Natural killer cell (primary cell): ENCODE measurements at regions of chr15 and their contacts with region 1.

Region 1: DNA sequence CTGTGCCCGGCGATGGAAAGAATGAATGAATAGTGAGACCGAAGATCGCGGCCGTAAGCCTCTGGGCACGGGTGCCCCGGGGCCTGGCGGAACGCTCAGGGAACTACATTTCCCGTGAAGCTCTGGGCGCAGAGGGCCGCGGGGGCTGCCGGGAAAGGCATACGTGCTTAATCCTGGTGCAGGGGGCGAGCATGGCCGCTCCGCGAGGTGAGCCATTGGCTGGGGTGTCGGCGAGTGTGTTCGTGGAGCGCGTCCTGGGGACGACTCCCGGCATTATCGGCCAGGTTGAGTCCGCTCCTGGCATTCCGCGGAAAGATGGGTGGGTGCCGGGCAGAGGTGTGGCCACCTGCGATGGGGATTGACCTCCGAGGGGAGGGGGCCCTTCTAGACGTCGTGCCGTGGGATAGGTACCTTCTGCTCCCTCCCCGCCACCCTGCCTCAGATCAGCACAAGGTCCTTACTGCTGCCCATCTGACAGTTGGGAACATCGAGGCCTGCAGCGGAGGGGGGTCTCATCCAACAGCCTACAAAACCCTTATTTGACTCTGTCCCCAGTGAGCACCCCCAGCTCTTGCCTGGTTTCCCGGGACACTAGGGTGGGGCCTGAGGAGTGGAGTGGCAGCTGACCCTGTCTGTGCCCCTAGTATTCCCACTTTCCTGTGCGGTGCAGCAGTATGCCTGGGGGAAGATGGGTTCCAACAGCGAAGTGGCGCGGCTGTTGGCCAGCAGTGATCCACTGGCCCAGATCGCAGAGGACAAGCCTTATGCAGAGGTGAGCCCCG is at the start of gene MPI:
- DNase-seq: peak; percentile 75 to 89
- ATAC-seq: peak; percentile 97 to 100 (median 100)
- H3K4me3 ChIP-seq: peak within 1 kb of the TSS; percentile 65
- H3K4me3 Mint-ChIP-seq: peak within 1 kb of the TSS; percentile 86
- H3K27ac ChIP-seq: peak within 1 kb of the TSS; percentile 56
- H3K27ac Mint-ChIP-seq: peak within 1 kb of the TSS; percentile 85 to 87
- H3K4me1 ChIP-seq: peaks cover 42% of the 10 kb centered on the region
- H3K4me1 Mint-ChIP-seq: peaks cover 27 to 36% of the 10 kb centered on the region in 2 donors
- H3K27me3 ChIP-seq: no peaks in the 10 kb centered on the region
- H3K27me3 Mint-ChIP-seq: no peaks in the 10 kb centered on the region
- CTCF ChIP-seq: no peak
- total RNA-seq, gene MPI: 15.7 to 20.4 (median 18.8) TPM

Region 2: DNA sequence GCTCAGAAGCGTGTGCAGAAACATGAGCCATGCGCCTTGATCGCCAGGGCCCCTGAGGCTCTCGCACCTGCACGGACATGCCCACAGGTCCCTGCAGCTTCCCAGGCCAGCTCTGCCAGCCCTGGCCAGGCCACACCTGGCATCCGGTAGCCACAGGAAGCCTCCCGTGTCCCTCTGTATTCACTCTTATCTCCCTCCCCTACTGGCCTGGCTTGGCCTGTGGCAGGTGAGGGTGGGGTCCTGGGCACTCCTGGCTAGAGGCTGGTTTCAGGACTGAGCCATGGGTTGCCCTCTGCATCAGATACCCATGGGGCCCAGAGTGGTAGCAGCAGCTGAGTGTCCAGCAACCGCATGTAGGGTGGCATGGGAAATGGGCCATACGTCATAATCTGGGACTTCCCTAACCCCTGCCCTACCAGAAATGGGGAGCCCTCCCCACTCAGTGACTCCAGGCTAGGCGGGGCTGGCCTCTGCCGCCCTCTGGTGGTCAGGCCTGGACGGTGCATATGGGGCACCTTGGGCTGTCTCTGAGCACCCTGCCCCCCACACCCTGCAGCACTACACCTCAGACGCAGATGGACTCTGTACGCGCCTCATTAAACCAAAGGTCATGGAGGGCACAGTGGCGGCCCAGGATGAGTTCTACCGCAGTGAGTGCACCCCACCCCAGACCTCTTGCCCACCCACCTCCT is 90.1 kb before region 1 on chr15:
- intact Hi-C with region 1: no loop called
- DNase-seq: peak; percentile 90 to 94
- ATAC-seq: peak; percentile 89 to 98 (median 93)
- H3K4me3 ChIP-seq: no peak overlapping the region
- H3K4me3 Mint-ChIP-seq: peak overlapping the region; percentile 75
- H3K27ac ChIP-seq: peak overlapping the region; percentile 97
- H3K27ac Mint-ChIP-seq: peak overlapping the region; percentile 92 to 93
- H3K4me1 ChIP-seq: peaks cover 63% of the 10 kb centered on the region
- H3K4me1 Mint-ChIP-seq: peaks cover 31 to 57% of the 10 kb centered on the region in 2 donors
- H3K27me3 ChIP-seq: no peaks in the 10 kb centered on the region
- H3K27me3 Mint-ChIP-seq: no peaks in the 10 kb centered on the region
- CTCF ChIP-seq: peak; percentile 94

Region 3: GRCh38 chr15:74873036-74873755 is 16.9 kb before region 1 on chr15 and contains the start of gene SCAMP2:
- intact Hi-C with region 1: loop called (anchors 1 kb)
- DNase-seq: peak; percentile 90 to 94
- ATAC-seq: peak; percentile 95 to 97 (median 96)
- H3K4me3 ChIP-seq: peak within 1 kb of the TSS; percentile 81
- H3K4me3 Mint-ChIP-seq: peak within 1 kb of the TSS; percentile 99
- H3K27ac ChIP-seq: peak within 1 kb of the TSS; percentile 96
- H3K27ac Mint-ChIP-seq: peak within 1 kb of the TSS; percentile 95 to 98
- H3K4me1 ChIP-seq: peaks cover 47% of the 10 kb centered on the region
- H3K4me1 Mint-ChIP-seq: peaks cover 43 to 45% of the 10 kb centered on the region in 2 donors
- H3K27me3 ChIP-seq: no peaks in the 10 kb centered on the region
- H3K27me3 Mint-ChIP-seq: no peaks in the 10 kb centered on the region
- CTCF ChIP-seq: no peak
- total RNA-seq, gene SCAMP2: 78.8 to 101 (median 92.8) TPM

Region 4: DNA sequence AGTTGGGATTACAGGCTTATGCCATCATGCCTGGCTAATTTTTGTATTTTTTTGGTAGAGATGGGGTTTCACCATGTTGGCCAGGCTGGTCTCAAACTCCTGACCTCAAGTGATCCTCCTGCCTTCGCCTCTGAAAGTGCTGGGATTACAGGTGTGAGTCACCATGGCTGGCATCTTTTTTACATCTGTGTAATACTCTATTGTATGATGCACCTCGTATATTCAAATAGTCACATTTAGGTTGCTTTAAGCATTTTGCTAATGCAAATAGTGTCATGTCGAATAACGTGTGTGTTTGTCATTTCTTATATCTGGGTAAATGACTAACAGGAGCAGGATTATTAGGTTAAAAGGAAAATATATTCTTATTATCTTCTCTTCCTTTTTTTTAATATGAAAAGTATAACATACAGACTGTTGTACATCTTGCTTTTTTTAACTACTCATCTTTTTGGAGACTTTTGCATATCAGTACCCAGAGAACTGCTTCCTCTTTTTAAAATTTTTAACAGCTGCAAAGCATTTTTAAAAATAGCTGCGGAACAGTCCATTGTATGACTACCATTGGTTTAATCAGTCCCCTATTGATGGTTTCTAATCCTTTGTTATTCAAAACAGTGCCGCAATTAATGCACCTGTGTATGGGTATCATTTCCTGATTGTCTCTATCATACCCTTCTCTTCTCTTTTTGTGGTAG is 118.7 kb after region 1 on chr15:
- intact Hi-C with region 1: no loop called
- DNase-seq: no peak
- ATAC-seq: peak in 1 of 3 donors; percentile 35
- H3K4me3 ChIP-seq: no peak overlapping the region
- H3K4me3 Mint-ChIP-seq: no peak overlapping the region
- H3K27ac ChIP-seq: peak overlapping the region; percentile 30
- H3K27ac Mint-ChIP-seq: no peak overlapping the region
- H3K4me1 ChIP-seq: peaks cover 12% of the 10 kb centered on the region
- H3K4me1 Mint-ChIP-seq: no peaks in the 10 kb centered on the region
- H3K27me3 ChIP-seq: peaks cover 2% of the 10 kb centered on the region
- H3K27me3 Mint-ChIP-seq: peaks cover 3 to 7% of the 10 kb centered on the region in 2 donors
- CTCF ChIP-seq: no peak